H1 (cell line): ENCODE measurements at regions of chr16 and their contacts with region 1.

Region 1: GRCh38 chr16:3542601-3543373 is 34.4 kb downstream of the NLRC3 start:
- DNase-seq: no peak
- H3K4me3 ChIP-seq: no peak overlapping the region
- H3K27ac ChIP-seq: no peak overlapping the region
- H3K4me1 ChIP-seq: peaks cover 0 to 7% (median 3%) of the 10 kb centered on the region in 4 experiments; a peak in 4 of 7 replicates
- H3K27me3 ChIP-seq: no peaks in the 10 kb centered on the region
- CTCF ChIP-seq: no peak
- EP300 ChIP-seq: no peak
- POLR2A ChIP-seq: no peak
- RAD21 ChIP-seq: no peak

Region 2: GRCh38 chr16:3513892-3514590 is 28.7 kb before region 1 on chr16:
- CTCF ChIA-PET with region 1: no interaction called
- POLR2A ChIA-PET with region 1: no interaction called
- DNase-seq: no peak
- H3K4me3 ChIP-seq: no peak overlapping the region
- H3K27ac ChIP-seq: no peak overlapping the region
- H3K4me1 ChIP-seq: no peaks in the 10 kb centered on the region
- H3K27me3 ChIP-seq: no peaks in the 10 kb centered on the region
- CTCF ChIP-seq: no peak
- EP300 ChIP-seq: no peak
- POLR2A ChIP-seq: no peak
- RAD21 ChIP-seq: no peak

Region 3: DNA sequence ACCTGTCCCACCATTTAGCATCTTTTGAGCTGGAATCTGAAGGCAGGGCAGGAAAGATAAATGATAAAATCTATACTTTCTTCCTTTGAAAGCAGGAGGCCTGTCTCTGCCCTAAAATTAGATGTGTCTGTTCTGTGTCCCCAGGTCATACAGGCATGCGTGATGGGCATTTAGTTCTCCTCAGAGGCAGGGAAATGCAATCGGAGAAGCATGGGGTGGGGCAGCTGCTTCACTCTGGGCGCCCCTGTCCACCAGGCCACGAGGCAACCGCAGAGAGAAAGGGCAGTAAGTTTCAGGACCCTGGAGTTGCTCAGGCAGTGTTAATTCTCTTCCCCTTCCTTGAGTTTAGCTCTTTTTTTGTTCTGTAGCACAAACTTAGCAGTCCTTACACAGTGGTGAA is 16.8 kb before region 1 on chr16:
- CTCF ChIA-PET with region 1: interaction called, 15 read pairs
- POLR2A ChIA-PET with region 1: interaction called, 4 read pairs
- DNase-seq: no peak
- H3K4me3 ChIP-seq: no peak overlapping the region
- H3K27ac ChIP-seq: no peak overlapping the region
- H3K4me1 ChIP-seq: no peaks in the 10 kb centered on the region
- H3K27me3 ChIP-seq: no peaks in the 10 kb centered on the region
- CTCF ChIP-seq: no peak
- EP300 ChIP-seq: no peak
- POLR2A ChIP-seq: no peak
- RAD21 ChIP-seq: no peak